ENCODE measurements at regions of chr11 and their contacts with region 1.

Region 1: DNA sequence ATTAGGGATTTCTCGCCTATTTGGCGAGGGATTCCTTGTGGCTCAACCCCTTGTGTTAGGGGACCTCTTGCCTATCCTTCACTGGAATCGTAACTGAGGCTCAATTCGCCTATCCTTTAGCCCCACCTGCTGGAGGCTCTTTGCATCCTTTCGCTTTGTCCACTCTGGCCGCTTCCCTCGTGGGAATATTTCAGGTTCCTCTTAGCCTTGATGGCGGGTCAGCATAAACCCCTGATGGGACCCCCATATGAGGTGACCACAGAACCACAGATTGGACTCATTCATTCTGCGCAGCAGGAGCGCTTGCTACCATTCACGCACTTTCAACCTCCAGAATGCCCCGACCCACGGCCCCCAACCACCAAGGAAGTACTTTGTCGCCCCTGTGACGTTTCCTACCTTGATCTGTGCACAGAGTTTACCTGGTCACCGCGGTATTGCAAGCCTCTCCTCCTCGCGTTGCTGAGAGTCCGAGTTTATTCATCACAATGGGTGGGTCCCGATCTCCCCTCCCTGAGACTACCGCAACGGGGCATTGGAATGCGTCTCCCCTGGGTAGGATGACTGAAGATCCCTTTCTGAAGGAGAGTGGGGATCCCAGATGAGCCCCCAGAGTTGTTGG is at the start of gene OR52N2:
- DNase-seq: peak; percentile 46 to 83 (median 73)
- ATAC-seq: peak; percentile 87
- H3K4me3 ChIP-seq: peak within 1 kb of the TSS; percentile 58 to 64
- H3K4me3 Mint-ChIP-seq: peak within 1 kb of the TSS; percentile 91
- H3K27ac ChIP-seq: no peak within 1 kb of the TSS
- H3K27ac Mint-ChIP-seq: no peak within 1 kb of the TSS
- H3K4me1 ChIP-seq: peaks cover 7% of the 10 kb centered on the region
- H3K4me1 Mint-ChIP-seq: peaks cover 13% of the 10 kb centered on the region
- H3K27me3 ChIP-seq: no peaks in the 10 kb centered on the region
- H3K27me3 Mint-ChIP-seq: peaks cover 14% of the 10 kb centered on the region
- CTCF ChIP-seq: peak; percentile 82
- total RNA-seq, gene OR52N2: not detected

Region 2: GRCh38 chr11:5123802-5124521 is 684.6 kb before region 1 on chr11:
- CTCF ChIA-PET with region 1: interaction called, 3 read pairs
- POLR2A ChIA-PET with region 1: no interaction called
- intact Hi-C with region 1: loop called (anchors 1 kb)
- DNase-seq: peak in 7 of 9 experiments; percentile 17 to 55 (median 32)
- ATAC-seq: no peak
- H3K4me3 ChIP-seq: no peak overlapping the region
- H3K4me3 Mint-ChIP-seq: no peak overlapping the region
- H3K27ac ChIP-seq: no peak overlapping the region
- H3K27ac Mint-ChIP-seq: no peak overlapping the region
- H3K4me1 ChIP-seq: no peaks in the 10 kb centered on the region
- H3K4me1 Mint-ChIP-seq: no peaks in the 10 kb centered on the region
- H3K27me3 ChIP-seq: no peaks in the 10 kb centered on the region
- H3K27me3 Mint-ChIP-seq: peaks cover 5% of the 10 kb centered on the region
- CTCF ChIP-seq: peak; percentile 71

Region 3: DNA sequence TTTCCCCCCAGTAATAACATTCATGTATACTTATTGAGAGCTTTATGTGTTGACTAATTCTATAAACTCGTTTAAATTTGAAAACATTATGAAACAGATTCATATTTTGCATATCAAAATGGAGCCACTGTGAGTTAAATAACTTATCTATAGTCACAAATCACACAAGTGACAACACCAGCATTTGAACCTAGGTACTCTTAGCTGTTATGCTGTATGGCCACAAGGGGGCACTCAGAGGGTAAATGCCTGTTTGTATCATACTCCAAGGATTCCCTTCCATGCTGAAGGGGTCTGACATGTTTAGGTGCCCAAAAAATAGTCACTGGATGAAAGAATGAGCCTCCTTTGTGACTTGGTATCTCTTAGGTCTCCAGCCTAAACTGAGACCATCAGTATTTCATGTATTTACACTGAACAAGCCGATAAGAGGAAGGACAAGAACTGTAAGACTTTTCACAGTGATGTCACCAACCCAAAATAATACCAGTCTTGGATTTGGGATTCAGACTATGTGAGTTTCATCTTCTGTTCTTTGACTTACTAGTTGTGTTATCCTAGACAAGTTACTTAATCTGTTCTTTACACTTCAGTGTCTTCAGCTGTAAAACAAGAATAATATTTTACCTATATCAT is 332.3 kb before region 1 on chr11:
- CTCF ChIA-PET with region 1: interaction called, 12 read pairs
- POLR2A ChIA-PET with region 1: no interaction called
- intact Hi-C with region 1: loop called in 1 of 2 experiments (anchors 1 kb)
- DNase-seq: peak in 6 of 9 experiments; percentile 2 to 58 (median 28)
- ATAC-seq: no peak
- H3K4me3 ChIP-seq: no peak overlapping the region
- H3K4me3 Mint-ChIP-seq: no peak overlapping the region
- H3K27ac ChIP-seq: no peak overlapping the region
- H3K27ac Mint-ChIP-seq: no peak overlapping the region
- H3K4me1 ChIP-seq: no peaks in the 10 kb centered on the region
- H3K4me1 Mint-ChIP-seq: no peaks in the 10 kb centered on the region
- H3K27me3 ChIP-seq: no peaks in the 10 kb centered on the region
- H3K27me3 Mint-ChIP-seq: peaks cover 10% of the 10 kb centered on the region
- CTCF ChIP-seq: peak; percentile 74

Region 4: DNA sequence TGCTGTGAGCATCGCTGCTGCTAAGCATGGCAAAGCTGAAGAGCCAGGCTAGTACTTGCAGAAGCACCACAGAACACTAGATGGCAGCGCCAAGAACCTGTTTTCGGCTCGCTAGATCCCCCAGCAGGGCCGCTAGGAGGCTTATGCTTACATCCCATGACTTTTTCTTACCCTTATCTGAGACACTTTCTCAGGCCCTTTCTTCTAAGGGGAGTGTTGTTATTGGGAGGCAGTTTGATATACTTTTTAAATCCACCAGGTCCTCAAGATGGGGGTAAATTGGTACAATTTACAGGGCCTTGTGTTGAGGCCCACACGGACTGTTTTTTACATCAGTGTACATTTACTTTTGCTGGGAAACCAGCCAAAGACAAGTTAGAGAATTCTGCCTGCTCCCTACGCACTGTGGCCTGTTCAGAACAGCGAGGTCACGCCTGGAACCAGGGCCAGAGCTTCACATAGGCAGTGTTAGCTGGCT is 208.2 kb before region 1 on chr11:
- CTCF ChIA-PET with region 1: interaction called, 13 read pairs
- POLR2A ChIA-PET with region 1: no interaction called
- intact Hi-C with region 1: loop called (anchors 1 to 2 kb)
- DNase-seq: peak; percentile 10 to 77 (median 58)
- ATAC-seq: peak; percentile 89
- H3K4me3 ChIP-seq: no peak overlapping the region
- H3K4me3 Mint-ChIP-seq: no peak overlapping the region
- H3K27ac ChIP-seq: no peak overlapping the region
- H3K27ac Mint-ChIP-seq: no peak overlapping the region
- H3K4me1 ChIP-seq: no peaks in the 10 kb centered on the region
- H3K4me1 Mint-ChIP-seq: peaks cover 4% of the 10 kb centered on the region
- H3K27me3 ChIP-seq: no peaks in the 10 kb centered on the region
- H3K27me3 Mint-ChIP-seq: peaks cover 4% of the 10 kb centered on the region
- CTCF ChIP-seq: peak; percentile 68

Measured in CD8-positive, alpha-beta T cell (primary cell).